ENCODE measurements at regions of chr12 and their contacts with region 1.

Region 1: DNA sequence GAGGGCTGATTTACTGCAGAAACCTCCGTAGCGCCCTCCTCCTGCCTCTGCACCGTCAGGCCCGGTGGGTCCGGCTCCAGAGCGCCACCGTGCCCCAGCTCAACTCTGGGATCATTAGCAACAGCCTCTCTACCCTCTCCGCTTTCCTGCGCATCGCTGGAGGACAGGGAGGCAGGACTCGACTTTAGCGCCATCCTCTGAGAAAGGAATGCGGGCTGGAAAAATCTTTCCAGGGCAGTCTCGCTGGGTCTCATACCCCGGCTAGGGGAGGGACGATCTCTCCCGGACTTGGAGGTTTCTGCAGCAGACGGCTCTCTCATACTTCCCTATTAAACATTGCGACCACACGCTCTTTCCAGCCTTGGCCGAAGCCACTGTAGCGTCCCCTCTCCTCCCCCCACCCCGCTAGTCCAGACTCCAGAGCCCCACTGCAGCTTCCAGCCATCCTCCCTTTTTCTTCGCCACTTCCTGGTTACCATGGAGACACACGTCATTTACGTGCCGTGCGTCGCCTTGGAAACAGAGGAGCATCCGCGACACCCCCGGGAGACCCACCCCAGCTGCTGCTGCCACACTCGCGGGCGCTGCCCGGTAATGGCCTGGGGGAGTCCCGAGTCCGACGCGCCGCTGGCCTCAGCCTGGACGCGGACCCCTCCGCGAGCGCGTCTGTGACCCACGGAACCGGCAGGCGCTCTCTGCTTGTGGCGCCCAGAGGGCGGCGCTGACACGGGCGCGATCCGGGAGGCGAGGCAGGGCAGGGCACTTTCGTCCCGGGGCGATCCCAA is at the start of gene CCDC184:
- DNase-seq: peak; percentile 58 to 85 (median 83)
- ATAC-seq: peak; percentile 84
- H3K4me3 ChIP-seq: peak within 1 kb of the TSS; percentile 80
- H3K4me3 Mint-ChIP-seq: peak within 1 kb of the TSS; percentile 91 to 98 (median 96)
- H3K27ac ChIP-seq: peak within 1 kb of the TSS; percentile 59
- H3K27ac Mint-ChIP-seq: peak within 1 kb of the TSS; percentile 60 to 95 (median 86)
- H3K4me1 ChIP-seq: peaks cover 6 to 11% of the 10 kb centered on the region in 2 donors
- H3K4me1 Mint-ChIP-seq: peaks cover 5 to 28% (median 8%) of the 10 kb centered on the region in 7 donors
- H3K27me3 ChIP-seq: peaks cover 0 to 4% of the 10 kb centered on the region in 2 donors
- H3K27me3 Mint-ChIP-seq: peaks cover 21 to 81% (median 38%) of the 10 kb centered on the region in 5 donors
- total RNA-seq, gene CCDC184: 0.22 to 3.8 (median 1.8) TPM in 4 of 5 experiments, not detected in the other

Region 2: DNA sequence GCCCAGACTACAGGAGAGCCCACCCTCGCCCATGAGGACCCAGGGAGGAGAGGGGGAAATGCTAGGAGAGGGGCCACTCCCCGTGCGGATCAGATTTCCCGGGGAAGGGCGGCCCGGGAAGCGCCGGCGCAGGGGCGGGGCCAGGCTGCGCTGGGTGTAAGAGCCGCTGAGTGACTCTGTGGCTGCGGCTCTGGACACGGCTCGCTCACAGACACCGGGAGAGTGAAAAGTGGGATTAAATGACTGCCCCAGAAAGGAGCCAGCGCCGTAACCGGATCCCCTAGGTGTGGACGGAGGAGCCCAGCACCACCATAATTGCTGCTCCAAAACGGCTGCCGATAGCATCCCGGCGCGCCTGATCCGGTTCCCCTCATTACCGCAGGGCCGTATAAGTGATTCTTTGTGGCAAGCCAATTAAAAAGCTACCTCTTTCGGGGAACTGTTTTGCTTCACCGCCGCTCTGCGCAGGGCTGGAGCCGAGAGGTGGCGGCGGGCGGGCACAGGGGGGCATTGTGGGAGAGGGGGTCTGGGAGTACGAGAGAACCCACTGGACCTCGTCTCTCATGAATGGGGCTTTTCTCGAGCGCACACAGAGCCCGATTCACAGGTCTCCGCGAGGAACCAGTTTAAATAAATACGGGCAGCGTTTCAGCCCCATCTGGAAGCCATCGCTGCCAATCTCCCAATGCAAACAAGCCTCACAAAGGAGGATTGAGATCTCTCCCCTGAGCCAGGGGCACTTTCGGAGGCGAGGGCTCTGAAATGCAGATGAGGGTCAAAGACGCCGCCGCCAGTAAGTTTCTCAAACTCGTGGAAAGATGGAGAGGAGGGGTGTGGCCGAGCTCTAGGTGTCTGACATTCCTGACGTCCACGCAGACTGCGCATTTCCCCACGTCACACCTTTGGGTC is 181.5 kb before region 1 on chr12:
- CTCF ChIA-PET with region 1: no interaction called
- POLR2A ChIA-PET with region 1: no interaction called
- intact Hi-C with region 1: loop called in 1 of 2 experiments (anchors 5 kb)
- DNase-seq: peak in 3 of 9 donors; percentile 15 to 41 (median 18)
- ATAC-seq: peak; percentile 30
- H3K4me3 ChIP-seq: peak overlapping the region; percentile 15
- H3K4me3 Mint-ChIP-seq: peak overlapping the region; percentile 76 to 90 (median 80)
- H3K27ac ChIP-seq: no peak overlapping the region
- H3K27ac Mint-ChIP-seq: peak overlapping the region in 2 of 9 donors; percentile 21 to 72
- H3K4me1 ChIP-seq: peaks cover 34 to 45% of the 10 kb centered on the region in 2 donors
- H3K4me1 Mint-ChIP-seq: peaks cover 21 to 43% (median 39%) of the 10 kb centered on the region in 7 donors
- H3K27me3 ChIP-seq: peaks cover 25 to 44% of the 10 kb centered on the region in 2 donors
- H3K27me3 Mint-ChIP-seq: peaks cover 76 to 96% (median 83%) of the 10 kb centered on the region in 5 donors

Measured in naive thymus-derived CD4-positive, alpha-beta T cell (primary cell).